Thyroid gland (tissue), 4 donors: ENCODE measurements at regions of chr6 and their contacts with region 1.

Region 1: DNA sequence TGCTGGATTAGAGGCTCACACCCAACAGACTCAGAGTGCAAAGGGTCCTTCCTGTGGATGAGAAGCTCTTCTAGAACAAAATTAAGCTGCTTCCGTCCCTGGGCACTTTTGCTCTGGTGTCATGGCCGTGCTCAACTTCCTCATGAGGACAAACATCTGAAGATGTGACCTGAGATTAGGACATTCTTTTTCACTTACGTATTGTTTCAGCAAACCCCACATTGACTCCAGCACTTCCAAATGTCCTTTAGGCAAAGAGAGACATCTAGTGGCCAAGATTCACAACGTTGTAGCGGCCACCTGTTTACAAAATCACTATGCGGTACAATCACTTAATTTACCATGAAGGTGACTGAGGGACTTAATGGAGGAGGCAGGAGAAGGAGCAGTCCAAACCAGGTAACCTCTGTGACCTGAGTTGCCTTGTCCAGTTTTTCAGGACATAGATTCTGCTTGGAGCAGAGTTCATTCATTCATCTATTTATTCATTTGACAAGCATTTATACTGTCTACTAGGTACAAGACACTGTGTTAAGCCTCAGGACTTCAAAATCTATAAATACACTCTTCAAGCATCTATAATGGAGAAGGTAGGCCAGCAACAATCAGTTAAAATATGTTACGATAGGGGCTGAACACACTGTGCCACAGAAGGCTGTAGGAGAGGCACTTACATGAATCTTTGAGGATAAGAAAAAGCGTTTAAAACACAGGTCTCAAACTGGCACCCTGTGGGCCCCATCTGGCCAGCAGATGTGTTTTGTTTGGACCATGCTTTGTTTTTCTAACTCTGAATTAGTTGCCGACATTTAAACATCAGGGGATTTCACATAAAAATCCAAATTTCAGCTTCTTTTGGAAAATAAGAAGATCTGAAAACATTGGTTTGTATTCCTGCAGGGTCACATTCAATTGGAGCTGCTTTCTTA is 5.6 kb upstream of the ADGRF1 start:
- DNase-seq: peak; percentile 53 to 54
- H3K4me3 ChIP-seq: no peak overlapping the region
- H3K27ac ChIP-seq: peak overlapping the region in 2 of 3 donors; percentile 39 to 50
- H3K4me1 ChIP-seq: peaks cover 9 to 24% of the 10 kb centered on the region in 2 donors
- H3K27me3 ChIP-seq: no peaks in the 10 kb centered on the region
- CTCF ChIP-seq: peak; percentile 32 to 94 (median 81)
- POLR2A ChIP-seq: no peak

Region 2: DNA sequence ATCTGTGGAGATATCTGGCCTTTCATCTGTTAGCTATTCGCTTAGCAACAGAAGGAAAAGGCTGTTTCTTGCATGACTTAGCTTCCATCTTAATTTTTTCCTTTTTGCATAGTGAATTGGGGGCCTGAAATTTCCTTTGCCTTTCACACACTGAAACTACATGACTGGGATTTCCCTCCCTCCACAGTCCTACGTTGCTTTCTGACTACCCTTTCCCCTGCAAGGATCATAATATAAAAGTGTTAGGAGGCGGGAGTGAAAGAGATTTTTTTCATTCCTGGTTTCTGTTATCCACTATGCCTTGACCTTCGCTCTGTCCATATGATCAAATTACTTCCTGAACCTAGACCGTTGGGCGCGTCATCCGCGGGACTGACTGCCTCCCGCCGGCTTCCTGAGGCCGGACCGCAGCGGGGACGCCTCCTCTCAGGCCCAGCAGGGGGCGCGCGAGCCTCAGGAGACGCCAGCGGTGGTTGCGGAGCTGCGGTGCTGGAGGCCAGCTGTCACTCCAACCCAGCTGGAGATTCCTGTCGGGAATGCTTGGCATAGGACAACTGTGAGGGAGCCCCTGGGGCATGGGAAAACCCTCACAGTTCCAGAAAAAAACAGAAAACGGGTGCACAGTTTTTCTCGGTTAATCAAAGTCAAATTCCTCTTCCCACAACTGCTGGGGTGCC is 198.9 kb before region 1 on chr6:
- intact Hi-C with region 1: loop called (anchors 5 kb)
- DNase-seq: peak; percentile 81 to 85
- H3K4me3 ChIP-seq: no peak overlapping the region
- H3K27ac ChIP-seq: no peak overlapping the region
- H3K4me1 ChIP-seq: peaks cover 0 to 10% of the 10 kb centered on the region in 2 donors
- H3K27me3 ChIP-seq: no peaks in the 10 kb centered on the region
- CTCF ChIP-seq: peak; percentile 78 to 97 (median 96)
- POLR2A ChIP-seq: no peak

Region 3: GRCh38 chr6:46993846-46994245 is 53.9 kb before region 1 on chr6:
- intact Hi-C with region 1: loop called (anchors 10 kb)
- DNase-seq: no peak
- H3K4me3 ChIP-seq: no peak overlapping the region
- H3K27ac ChIP-seq: no peak overlapping the region
- H3K4me1 ChIP-seq: peaks cover 18 to 24% of the 10 kb centered on the region in 2 donors
- H3K27me3 ChIP-seq: no peaks in the 10 kb centered on the region
- CTCF ChIP-seq: no peak
- POLR2A ChIP-seq: no peak

Region 4: GRCh38 chr6:47188588-47189021 is 140.9 kb after region 1 on chr6:
- intact Hi-C with region 1: no loop called
- DNase-seq: peak; percentile 8 to 11
- H3K4me3 ChIP-seq: no peak overlapping the region
- H3K27ac ChIP-seq: peak overlapping the region in 1 of 3 donors; percentile 48
- H3K4me1 ChIP-seq: peaks cover 0 to 14% of the 10 kb centered on the region in 2 donors
- H3K27me3 ChIP-seq: no peaks in the 10 kb centered on the region
- CTCF ChIP-seq: no peak
- POLR2A ChIP-seq: no peak